Endothelial cell of umbilical vein (primary cell): ENCODE measurements at regions of chr20 and their contacts with region 1.

Region 1: GRCh38 chr20:62065669-62066338 is at the start of gene TAF4:
- DNase-seq: peak; percentile 58
- H3K4me3 ChIP-seq: peak within 1 kb of the TSS; percentile 25 to 55 (median 53)
- H3K27ac ChIP-seq: peak within 1 kb of the TSS; percentile 47
- H3K4me1 ChIP-seq: peaks cover 16% of the 10 kb centered on the region
- H3K27me3 ChIP-seq: no peaks in the 10 kb centered on the region
- CTCF ChIP-seq: no peak
- POLR2A ChIP-seq: peak; percentile 97
- total RNA-seq, gene TAF4: 15.2 and 19.5 TPM in 2 replicates

Region 2: GRCh38 chr20:61958773-61959700 is 106.8 kb before region 1 on chr20:
- CTCF ChIA-PET with region 1: no interaction called
- POLR2A ChIA-PET with region 1: no interaction called
- dilution Hi-C with region 1: no loop called
- intact Hi-C with region 1: no loop called
- DNase-seq: no peak
- H3K4me3 ChIP-seq: no peak overlapping the region
- H3K27ac ChIP-seq: no peak overlapping the region
- H3K4me1 ChIP-seq: no peaks in the 10 kb centered on the region
- H3K27me3 ChIP-seq: no peaks in the 10 kb centered on the region
- CTCF ChIP-seq: no peak
- POLR2A ChIP-seq: no peak

Region 3: GRCh38 chr20:62025832-62026563 is 39.8 kb before region 1 on chr20:
- CTCF ChIA-PET with region 1: interaction called, 7 read pairs
- POLR2A ChIA-PET with region 1: interaction called, 3 read pairs
- dilution Hi-C with region 1: no loop called
- intact Hi-C with region 1: loop called (anchors 5 kb)
- DNase-seq: peak; percentile 78
- H3K4me3 ChIP-seq: no peak overlapping the region
- H3K27ac ChIP-seq: no peak overlapping the region
- H3K4me1 ChIP-seq: peaks cover 10% of the 10 kb centered on the region
- H3K27me3 ChIP-seq: no peaks in the 10 kb centered on the region
- CTCF ChIP-seq: peak; percentile 65 to 85
- POLR2A ChIP-seq: no peak

Region 4: GRCh38 chr20:62136283-62137091 is 70.7 kb after region 1 on chr20:
- CTCF ChIA-PET with region 1: interaction called, 5 read pairs
- POLR2A ChIA-PET with region 1: no interaction called
- dilution Hi-C with region 1: no loop called
- intact Hi-C with region 1: loop called (anchors 5 kb)
- DNase-seq: peak; percentile 84
- H3K4me3 ChIP-seq: no peak overlapping the region
- H3K27ac ChIP-seq: no peak overlapping the region
- H3K4me1 ChIP-seq: no peaks in the 10 kb centered on the region
- H3K27me3 ChIP-seq: no peaks in the 10 kb centered on the region
- CTCF ChIP-seq: peak; percentile 81
- POLR2A ChIP-seq: no peak

Region 5: GRCh38 chr20:62182613-62183425 is 117.0 kb after region 1 on chr20 and contains the start of gene MTG2:
- CTCF ChIA-PET with region 1: no interaction called
- POLR2A ChIA-PET with region 1: no interaction called
- dilution Hi-C with region 1: no loop called
- intact Hi-C with region 1: loop called (anchors 5 kb)
- DNase-seq: peak; percentile 93
- H3K4me3 ChIP-seq: peak within 1 kb of the TSS; percentile 87 to 98 (median 93)
- H3K27ac ChIP-seq: peak within 1 kb of the TSS; percentile 92
- H3K4me1 ChIP-seq: peaks cover 22% of the 10 kb centered on the region
- H3K27me3 ChIP-seq: no peaks in the 10 kb centered on the region
- CTCF ChIP-seq: no peak
- POLR2A ChIP-seq: peak; percentile 90
- total RNA-seq, gene MTG2: 22.1 and 31.6 TPM in 2 replicates